ENCODE measurements at regions of chr10 and their contacts with region 1.

Region 1: DNA sequence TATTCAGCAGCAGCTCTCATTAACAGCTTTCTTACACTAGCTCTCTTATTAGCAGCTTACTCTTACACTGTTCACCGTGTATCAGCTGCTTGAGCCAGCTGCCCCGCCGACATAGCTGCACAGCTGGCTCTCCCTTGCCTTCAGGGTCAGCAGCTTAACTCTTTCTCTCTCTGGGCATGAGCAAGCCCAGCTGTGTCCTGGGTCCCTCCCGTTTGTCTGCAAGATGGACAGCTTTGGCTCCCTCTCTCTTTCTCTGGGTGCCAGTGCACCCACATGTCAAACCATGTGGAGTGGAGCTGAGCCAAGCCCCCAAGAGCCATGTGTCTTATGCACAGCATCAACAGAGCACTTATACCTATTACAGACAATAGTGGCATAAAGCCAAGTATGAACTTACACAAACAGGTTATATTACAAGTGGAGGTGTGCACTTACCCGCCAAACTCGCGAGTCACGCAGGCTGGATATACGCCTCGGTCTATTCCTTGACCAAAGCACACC is 35.7 kb upstream of the MTPAP start:
- DNase-seq: peak; percentile 34
- CTCF ChIP-seq: peak; percentile 40

Region 2: DNA sequence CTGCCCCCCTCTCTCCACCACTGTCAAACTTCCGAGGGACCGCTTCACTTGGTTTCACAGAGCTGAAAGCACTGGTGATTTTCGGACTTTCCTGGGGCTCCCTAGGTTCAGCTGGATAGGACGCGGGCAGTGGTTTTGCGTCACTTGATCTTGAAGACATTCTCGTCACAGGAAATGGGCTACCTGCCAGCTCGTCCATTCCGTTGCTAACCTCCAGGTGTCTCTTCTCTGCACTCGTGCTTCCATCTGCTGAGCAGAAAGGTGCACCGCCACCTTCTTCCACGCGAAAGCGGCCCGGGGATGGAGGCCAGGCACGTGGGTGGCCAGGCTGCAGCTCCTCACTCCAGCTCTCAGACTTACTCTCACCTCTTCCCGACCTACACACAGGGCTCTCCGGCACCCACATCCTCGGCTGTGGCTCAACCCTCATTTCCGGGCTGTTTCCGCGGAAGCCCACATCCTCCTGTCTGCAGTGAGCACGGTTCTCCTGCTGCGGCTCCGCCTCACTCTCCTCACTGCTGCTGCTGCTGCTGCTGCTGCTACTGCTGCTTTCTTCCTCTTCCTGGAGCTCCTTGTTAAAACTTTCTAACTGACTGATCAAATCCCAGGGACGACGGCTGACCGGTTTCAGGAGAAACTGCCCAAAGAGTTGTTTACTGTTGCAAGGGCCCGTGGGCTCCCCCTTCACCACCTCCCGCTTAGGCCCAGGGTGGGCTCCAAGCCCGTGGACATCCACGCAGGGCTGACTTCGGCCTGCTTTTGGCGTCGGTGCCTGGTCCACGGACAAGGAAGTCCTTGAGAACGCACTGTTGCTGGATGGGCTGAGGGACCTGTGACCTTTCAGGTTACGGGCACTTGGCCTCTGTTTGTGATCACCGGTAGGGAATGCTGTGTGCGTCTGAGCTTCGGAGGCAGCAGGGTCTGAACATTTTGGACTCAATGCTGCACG is 357.4 kb before region 1 on chr10:
- in situ Hi-C with region 1: no loop called
- DNase-seq: peak; percentile 53
- CTCF ChIP-seq: no peak

Region 3: GRCh38 chr10:30591249-30591670 is 206.5 kb after region 1 on chr10:
- in situ Hi-C with region 1: loop called (anchors 10 kb)
- DNase-seq: peak; percentile 28
- CTCF ChIP-seq: peak; percentile 62

Measured in GM13977 (cell line).